PC-9 (cell line): ENCODE measurements at regions of chr1 and their contacts with region 1.

Region 1: GRCh38 chr1:211578640-211579433 is at the start of gene SLC30A1:
- DNase-seq: peak; percentile 89 to 99
- H3K4me3 ChIP-seq: peak within 1 kb of the TSS; percentile 77
- H3K27ac ChIP-seq: peak within 1 kb of the TSS; percentile 67
- H3K4me1 ChIP-seq: peaks cover 36% of the 10 kb centered on the region
- H3K27me3 ChIP-seq: no peaks in the 10 kb centered on the region
- CTCF ChIP-seq: no peak
- total RNA-seq, gene SLC30A1: 26.8 and 27.6 TPM in 2 replicates

Region 2: GRCh38 chr1:211382714-211383480 is 195.9 kb before region 1 on chr1:
- CTCF ChIA-PET with region 1: no interaction called
- POLR2A ChIA-PET with region 1: no interaction called
- intact Hi-C with region 1: loop called (anchors 2 kb)
- DNase-seq: peak; percentile 84 to 92
- H3K4me3 ChIP-seq: peak overlapping the region; percentile 68
- H3K27ac ChIP-seq: peak overlapping the region; percentile 93
- H3K4me1 ChIP-seq: peaks cover 13% of the 10 kb centered on the region
- H3K27me3 ChIP-seq: no peaks in the 10 kb centered on the region
- CTCF ChIP-seq: no peak

Region 3: DNA sequence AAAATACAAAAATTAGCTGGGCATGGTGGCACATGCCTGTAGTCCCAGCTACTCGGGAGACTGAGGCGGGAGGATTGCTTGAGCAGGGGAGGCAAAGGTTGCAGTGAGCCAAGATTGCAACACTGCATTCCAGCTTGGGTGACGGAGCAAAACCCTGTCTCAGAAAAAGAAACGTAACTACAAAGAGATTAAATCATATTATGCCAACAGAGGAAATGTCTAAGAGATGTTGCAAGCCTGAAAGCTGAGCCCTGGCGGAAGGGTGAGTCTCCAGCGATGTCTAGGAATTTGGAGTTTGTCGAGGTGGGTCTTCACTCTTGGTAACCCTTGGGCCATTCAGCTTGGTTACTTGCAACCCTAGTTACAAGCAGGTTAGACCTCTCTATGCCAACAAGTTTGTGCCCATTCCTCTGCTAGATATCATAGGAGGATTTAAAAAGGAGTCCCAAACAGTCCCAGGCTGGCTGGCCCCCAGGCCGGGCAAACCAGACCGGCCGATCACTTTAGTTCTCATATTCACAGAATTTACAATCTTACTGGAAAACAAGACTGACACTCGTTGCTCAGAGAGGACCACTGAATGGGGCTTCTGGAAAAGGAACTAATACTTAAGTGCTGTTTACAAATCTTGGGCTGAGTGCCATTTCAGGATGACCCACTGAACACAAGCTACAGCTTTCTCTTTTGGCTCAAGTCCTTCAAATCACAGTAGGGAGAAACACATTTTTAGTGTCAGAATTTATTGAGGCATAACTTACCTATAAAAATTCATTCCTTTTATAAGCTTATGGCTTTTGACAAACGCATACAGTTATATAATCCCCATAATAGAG is 27.0 kb before region 1 on chr1:
- CTCF ChIA-PET with region 1: no interaction called
- POLR2A ChIA-PET with region 1: no interaction called
- intact Hi-C with region 1: loop called (anchors 1 kb)
- DNase-seq: peak; percentile 86 to 97
- H3K4me3 ChIP-seq: peak overlapping the region; percentile 35; the same call in 1 of the 2 replicates
- H3K27ac ChIP-seq: peak overlapping the region; percentile 84
- H3K4me1 ChIP-seq: peaks cover 75% of the 10 kb centered on the region
- H3K27me3 ChIP-seq: no peaks in the 10 kb centered on the region
- CTCF ChIP-seq: no peak

Region 4: GRCh38 chr1:211613093-211613947 is 34.5 kb after region 1 on chr1:
- CTCF ChIA-PET with region 1: no interaction called
- POLR2A ChIA-PET with region 1: interaction called, 3 read pairs
- intact Hi-C with region 1: loop called (anchors 1 kb)
- DNase-seq: peak; percentile 79 to 84
- H3K4me3 ChIP-seq: no peak overlapping the region
- H3K27ac ChIP-seq: peak overlapping the region; percentile 71
- H3K4me1 ChIP-seq: peaks cover 23% of the 10 kb centered on the region
- H3K27me3 ChIP-seq: no peaks in the 10 kb centered on the region
- CTCF ChIP-seq: no peak

Region 5: GRCh38 chr1:211643324-211644212 is 64.7 kb after region 1 on chr1:
- CTCF ChIA-PET with region 1: no interaction called
- POLR2A ChIA-PET with region 1: interaction called, 7 read pairs
- intact Hi-C with region 1: loop called (anchors 2 kb)
- DNase-seq: peak; percentile 90 to 91
- H3K4me3 ChIP-seq: peak overlapping the region; percentile 17; the same call in 1 of the 2 replicates
- H3K27ac ChIP-seq: peak overlapping the region; percentile 92
- H3K4me1 ChIP-seq: peaks cover 97% of the 10 kb centered on the region
- H3K27me3 ChIP-seq: no peaks in the 10 kb centered on the region
- CTCF ChIP-seq: no peak

Region 6: DNA sequence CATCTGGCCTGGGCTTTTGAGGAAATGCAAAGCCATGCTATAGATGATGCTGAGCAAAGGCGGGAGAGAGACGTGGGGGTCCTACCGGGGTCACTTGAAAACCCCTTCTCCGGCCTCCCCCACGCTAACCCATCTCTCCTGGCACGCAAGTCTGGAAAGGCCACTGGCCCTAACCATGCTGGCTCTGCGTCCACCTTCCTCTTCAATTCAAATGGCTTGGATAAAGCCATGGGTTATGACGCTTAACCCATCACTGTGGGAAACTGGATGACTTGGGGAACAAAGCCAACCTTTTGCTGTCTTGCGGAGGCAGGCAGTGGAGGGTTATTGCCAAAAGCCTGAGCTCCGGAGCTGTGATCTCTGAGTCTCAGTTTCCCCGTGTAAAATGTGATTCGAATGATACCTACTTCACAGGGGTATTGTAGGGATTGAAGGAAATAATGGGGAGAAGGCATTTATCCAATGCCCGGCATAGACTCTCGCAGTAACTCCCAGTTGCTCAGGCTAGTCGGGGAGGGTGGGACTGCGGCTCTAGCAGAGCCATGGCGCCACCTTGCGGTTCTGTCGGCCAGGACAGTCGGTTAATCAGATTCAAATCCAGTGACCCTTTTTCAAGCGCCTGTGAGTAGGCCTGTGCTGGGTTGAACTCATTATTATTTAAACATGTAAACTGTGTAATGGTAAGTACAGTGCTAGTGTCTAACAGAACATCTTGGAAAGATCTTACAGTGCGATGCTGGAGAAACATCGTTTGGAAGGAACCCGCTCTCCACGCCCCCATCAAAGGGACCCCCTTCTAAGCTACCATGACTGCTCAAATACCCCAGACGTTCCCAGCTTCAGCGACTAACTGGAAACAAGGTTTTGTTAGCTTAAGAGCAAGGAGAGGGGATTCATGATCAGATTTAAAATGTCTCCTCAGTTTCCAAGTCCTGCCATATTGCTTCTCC is 76.3 kb after region 1 on chr1:
- CTCF ChIA-PET with region 1: no interaction called
- POLR2A ChIA-PET with region 1: no interaction called
- intact Hi-C with region 1: loop called (anchors 1 kb)
- DNase-seq: peak; percentile 69 to 85
- H3K4me3 ChIP-seq: no peak overlapping the region
- H3K27ac ChIP-seq: peak overlapping the region; percentile 94
- H3K4me1 ChIP-seq: peaks cover 33% of the 10 kb centered on the region
- H3K27me3 ChIP-seq: no peaks in the 10 kb centered on the region
- CTCF ChIP-seq: peak; percentile 94

Region 7: DNA sequence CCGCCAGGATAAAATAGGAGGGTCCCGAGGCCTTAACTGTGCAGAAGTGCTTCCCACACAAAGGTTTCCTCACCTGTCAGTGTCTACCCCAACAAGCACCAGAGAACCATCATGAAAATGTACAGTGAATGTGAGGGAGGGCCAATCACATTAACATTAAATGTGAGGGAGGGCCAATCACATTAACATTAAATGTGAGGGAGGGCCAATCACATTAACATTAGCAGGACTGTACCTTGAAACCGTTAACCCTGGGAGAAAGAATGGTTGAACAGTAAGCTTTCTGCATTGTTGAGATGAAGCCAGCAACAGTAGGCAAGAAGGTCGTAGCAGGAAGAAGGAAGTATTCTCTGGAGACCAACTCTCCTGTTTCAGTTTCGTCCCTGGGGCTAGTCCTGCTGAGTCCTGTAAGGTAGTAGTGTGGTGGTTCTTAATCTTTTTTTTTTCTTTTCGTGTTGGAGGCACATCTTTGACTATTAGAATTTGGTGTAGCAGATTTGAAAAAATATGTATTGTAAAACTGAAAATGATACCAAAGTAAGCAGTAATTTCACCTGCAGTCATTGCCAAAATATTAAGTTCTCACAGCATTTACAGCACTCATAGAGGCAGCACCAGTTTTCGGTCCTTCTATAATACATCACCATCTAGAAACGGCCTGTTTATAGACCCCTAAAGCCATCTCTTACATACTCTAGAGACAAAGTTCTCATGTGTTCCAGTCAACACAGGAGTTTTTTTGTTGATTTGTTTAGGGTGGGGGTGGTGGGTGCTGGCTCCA is 607.8 kb after region 1 on chr1:
- CTCF ChIA-PET with region 1: no interaction called
- POLR2A ChIA-PET with region 1: no interaction called
- intact Hi-C with region 1: no loop called
- DNase-seq: no peak
- H3K4me3 ChIP-seq: no peak overlapping the region
- H3K27ac ChIP-seq: no peak overlapping the region
- H3K4me1 ChIP-seq: no peaks in the 10 kb centered on the region
- H3K27me3 ChIP-seq: no peaks in the 10 kb centered on the region
- CTCF ChIP-seq: no peak

Region 8: GRCh38 chr1:212284744-212285684 is 706.2 kb after region 1 on chr1 and contains the start of gene PPP2R5A:
- CTCF ChIA-PET with region 1: no interaction called
- POLR2A ChIA-PET with region 1: no interaction called
- intact Hi-C with region 1: loop called (anchors 10 kb)
- DNase-seq: peak; percentile 96 to 99
- H3K4me3 ChIP-seq: peak within 1 kb of the TSS; percentile 89
- H3K27ac ChIP-seq: peak within 1 kb of the TSS; percentile 70
- H3K4me1 ChIP-seq: peaks cover 37% of the 10 kb centered on the region
- H3K27me3 ChIP-seq: no peaks in the 10 kb centered on the region
- CTCF ChIP-seq: no peak; the same call in 1 of the 2 replicates
- total RNA-seq, gene PPP2R5A: 22.8 and 26.7 TPM in 2 replicates